Activated CD4-positive, alpha-beta memory T cell treated with anti-CD3 and anti-CD28 coated beads for 36 hours (primary cell): ENCODE measurements at regions of chr14 and their contacts with region 1.

Region 1: DNA sequence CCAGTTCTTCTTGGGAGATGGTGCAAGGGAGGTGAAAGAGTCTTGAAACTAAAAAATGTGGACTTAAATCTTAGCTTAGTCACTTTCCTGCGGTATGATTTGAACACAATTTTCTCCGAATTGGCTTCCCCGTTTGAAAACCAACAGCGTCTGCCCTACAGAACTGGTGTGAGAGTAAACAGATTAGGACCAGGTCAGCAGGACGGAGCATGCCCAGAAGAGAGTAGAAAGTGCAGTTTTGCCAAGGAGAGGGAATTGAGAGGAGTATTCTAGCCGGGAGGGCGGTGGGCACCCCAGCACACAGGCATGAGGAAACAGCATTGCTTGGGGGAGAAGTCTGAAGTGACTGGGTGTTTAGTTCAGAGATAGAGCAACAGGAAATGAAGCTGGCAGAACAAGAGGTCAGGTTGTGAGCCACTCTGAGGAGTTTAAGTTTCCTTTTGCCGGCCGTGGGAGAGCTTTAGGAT is 927.1 kb downstream of the VRK1 start:
- DNase-seq: peak; percentile 58
- H3K4me3 Mint-ChIP-seq: peak overlapping the region; percentile 71
- H3K27ac Mint-ChIP-seq: peak overlapping the region; percentile 92
- H3K4me1 Mint-ChIP-seq: peaks cover 49% of the 10 kb centered on the region
- H3K27me3 Mint-ChIP-seq: no peaks in the 10 kb centered on the region

Region 2: GRCh38 chr14:97620066-97620465 is 104.2 kb before region 1 on chr14:
- CTCF ChIA-PET with region 1: no interaction called
- POLR2A ChIA-PET with region 1: no interaction called
- intact Hi-C with region 1: loop called (anchors 5 kb)
- DNase-seq: no peak
- H3K4me3 Mint-ChIP-seq: peak overlapping the region; percentile 65
- H3K27ac Mint-ChIP-seq: peak overlapping the region; percentile 80
- H3K4me1 Mint-ChIP-seq: peaks cover 45% of the 10 kb centered on the region
- H3K27me3 Mint-ChIP-seq: no peaks in the 10 kb centered on the region

Region 3: GRCh38 chr14:98120831-98121464 is 396.6 kb after region 1 on chr14:
- CTCF ChIA-PET with region 1: no interaction called
- POLR2A ChIA-PET with region 1: no interaction called
- intact Hi-C with region 1: no loop called
- DNase-seq: peak; percentile 39
- H3K4me3 Mint-ChIP-seq: no peak overlapping the region
- H3K27ac Mint-ChIP-seq: no peak overlapping the region
- H3K4me1 Mint-ChIP-seq: peaks cover 26% of the 10 kb centered on the region
- H3K27me3 Mint-ChIP-seq: no peaks in the 10 kb centered on the region

Region 4: DNA sequence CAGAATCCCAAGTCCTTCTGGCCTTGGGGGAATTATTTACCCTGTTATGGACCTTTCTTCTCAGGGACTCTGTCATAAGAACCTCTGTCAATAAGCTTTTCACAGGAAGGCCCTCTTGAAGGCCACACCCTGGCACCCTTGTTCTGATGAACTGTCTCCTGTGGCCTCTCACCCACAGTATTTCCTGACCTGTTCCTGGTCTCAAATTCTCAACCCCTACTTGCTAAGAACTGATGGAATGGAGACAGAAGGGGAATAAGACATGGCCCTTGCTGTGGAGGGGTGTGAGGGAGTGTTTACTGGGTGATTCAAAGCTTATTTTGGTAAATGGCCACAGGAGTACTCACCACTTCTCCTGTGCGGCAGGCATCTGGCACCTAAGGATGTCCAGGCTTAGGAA is 464.8 kb after region 1 on chr14:
- CTCF ChIA-PET with region 1: no interaction called
- POLR2A ChIA-PET with region 1: no interaction called
- intact Hi-C with region 1: loop called (anchors 5 kb)
- DNase-seq: peak; percentile 65
- H3K4me3 Mint-ChIP-seq: peak overlapping the region; percentile 75
- H3K27ac Mint-ChIP-seq: peak overlapping the region; percentile 100
- H3K4me1 Mint-ChIP-seq: peaks cover 94% of the 10 kb centered on the region
- H3K27me3 Mint-ChIP-seq: no peaks in the 10 kb centered on the region